Natural killer cell (primary cell): ENCODE measurements at regions of chr16 and their contacts with region 1.

Region 1: GRCh38 chr16:46908540-46909372 is 24.6 kb downstream of the GPT2 start:
- DNase-seq: peak; percentile 31 to 81
- ATAC-seq: peak in 2 of 3 donors; percentile 50 to 58
- H3K4me3 ChIP-seq: no peak overlapping the region
- H3K4me3 Mint-ChIP-seq: no peak overlapping the region
- H3K27ac ChIP-seq: no peak overlapping the region
- H3K27ac Mint-ChIP-seq: no peak overlapping the region
- H3K4me1 ChIP-seq: peaks cover 3% of the 10 kb centered on the region
- H3K4me1 Mint-ChIP-seq: no peaks in the 10 kb centered on the region
- H3K27me3 ChIP-seq: no peaks in the 10 kb centered on the region
- H3K27me3 Mint-ChIP-seq: no peaks in the 10 kb centered on the region
- CTCF ChIP-seq: peak; percentile 85

Region 2: DNA sequence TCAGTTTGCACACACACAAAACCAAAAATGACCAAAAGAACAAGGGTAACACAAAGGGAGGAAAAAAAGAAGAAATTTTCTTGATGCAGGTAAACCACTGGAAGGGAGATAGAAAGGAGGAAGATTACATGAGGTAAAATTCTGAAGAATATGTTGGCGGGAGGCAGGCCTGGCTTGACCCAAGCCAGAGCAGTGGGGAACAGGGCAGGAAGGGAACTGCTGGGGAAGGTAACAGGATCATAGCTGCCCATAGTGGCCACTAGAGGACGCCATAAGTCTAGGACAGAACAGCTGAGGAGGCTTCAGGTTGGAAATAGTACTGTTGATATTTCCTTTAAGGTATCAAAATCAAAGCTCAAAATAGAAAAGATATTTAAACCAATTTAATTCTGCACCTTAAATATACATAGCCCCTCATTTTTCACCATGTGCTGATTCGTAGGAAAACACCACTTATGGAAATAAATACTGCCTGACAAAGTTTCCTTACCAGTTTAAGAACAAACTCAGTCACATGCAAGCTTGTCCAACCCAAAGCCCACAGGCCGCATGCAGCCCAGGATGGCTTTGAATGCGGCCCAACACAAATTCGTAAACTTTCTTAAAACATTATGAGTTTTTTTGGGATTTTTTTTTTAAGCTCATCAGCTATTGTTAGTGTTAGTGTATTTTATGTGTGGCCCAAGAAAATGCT is 235.3 kb before region 1 on chr16:
- intact Hi-C with region 1: loop called (anchors 1 kb)
- DNase-seq: peak in 1 of 2 donors; percentile 80
- ATAC-seq: peak; percentile 79 to 86 (median 84)
- H3K4me3 ChIP-seq: no peak overlapping the region
- H3K4me3 Mint-ChIP-seq: no peak overlapping the region
- H3K27ac ChIP-seq: no peak overlapping the region
- H3K27ac Mint-ChIP-seq: no peak overlapping the region
- H3K4me1 ChIP-seq: no peaks in the 10 kb centered on the region
- H3K4me1 Mint-ChIP-seq: no peaks in the 10 kb centered on the region
- H3K27me3 ChIP-seq: no peaks in the 10 kb centered on the region
- H3K27me3 Mint-ChIP-seq: no peaks in the 10 kb centered on the region
- CTCF ChIP-seq: peak; percentile 87

Region 3: DNA sequence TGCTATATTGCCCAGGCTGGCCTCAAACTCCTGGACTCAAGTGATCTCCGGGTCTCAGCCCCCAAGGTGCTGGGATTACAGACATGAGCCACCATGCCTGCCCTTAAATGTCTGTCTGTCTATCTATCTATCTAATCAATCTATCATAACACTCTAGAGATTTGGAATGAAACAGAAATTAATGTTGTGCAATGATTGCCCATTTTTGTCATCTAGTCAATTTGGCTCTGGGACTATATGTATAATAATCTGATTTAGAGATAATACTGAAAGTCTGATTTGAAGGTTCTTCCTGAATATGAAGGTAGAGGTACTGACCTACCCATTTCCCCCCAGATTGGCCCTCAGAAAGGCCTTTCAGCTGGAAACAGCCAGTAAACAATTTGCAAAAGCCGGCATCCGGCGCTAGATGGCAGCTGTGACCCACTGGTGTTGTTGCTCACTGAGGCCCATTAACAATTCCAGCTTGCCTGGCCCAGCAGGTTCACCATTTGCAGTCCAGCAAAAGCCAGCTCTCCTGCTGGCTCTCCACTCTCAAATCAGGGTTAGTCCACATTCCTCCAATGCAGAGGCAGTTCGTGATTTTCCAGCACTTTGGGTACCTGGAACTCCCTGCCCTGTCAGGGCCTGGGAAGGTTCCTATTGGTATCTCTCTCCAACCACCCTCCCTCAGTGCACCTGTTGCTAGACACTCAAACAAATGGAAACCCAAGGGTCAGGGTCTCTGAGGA is 54.9 kb before region 1 on chr16:
- intact Hi-C with region 1: loop called (anchors 1 kb)
- DNase-seq: peak; percentile 39 to 70
- ATAC-seq: peak in 2 of 3 donors; percentile 47 to 72
- H3K4me3 ChIP-seq: no peak overlapping the region
- H3K4me3 Mint-ChIP-seq: no peak overlapping the region
- H3K27ac ChIP-seq: no peak overlapping the region
- H3K27ac Mint-ChIP-seq: no peak overlapping the region
- H3K4me1 ChIP-seq: no peaks in the 10 kb centered on the region
- H3K4me1 Mint-ChIP-seq: no peaks in the 10 kb centered on the region
- H3K27me3 ChIP-seq: no peaks in the 10 kb centered on the region
- H3K27me3 Mint-ChIP-seq: no peaks in the 10 kb centered on the region
- CTCF ChIP-seq: peak; percentile 63